ENCODE measurements at regions of chr11 and their contacts with region 1.

Region 1: DNA sequence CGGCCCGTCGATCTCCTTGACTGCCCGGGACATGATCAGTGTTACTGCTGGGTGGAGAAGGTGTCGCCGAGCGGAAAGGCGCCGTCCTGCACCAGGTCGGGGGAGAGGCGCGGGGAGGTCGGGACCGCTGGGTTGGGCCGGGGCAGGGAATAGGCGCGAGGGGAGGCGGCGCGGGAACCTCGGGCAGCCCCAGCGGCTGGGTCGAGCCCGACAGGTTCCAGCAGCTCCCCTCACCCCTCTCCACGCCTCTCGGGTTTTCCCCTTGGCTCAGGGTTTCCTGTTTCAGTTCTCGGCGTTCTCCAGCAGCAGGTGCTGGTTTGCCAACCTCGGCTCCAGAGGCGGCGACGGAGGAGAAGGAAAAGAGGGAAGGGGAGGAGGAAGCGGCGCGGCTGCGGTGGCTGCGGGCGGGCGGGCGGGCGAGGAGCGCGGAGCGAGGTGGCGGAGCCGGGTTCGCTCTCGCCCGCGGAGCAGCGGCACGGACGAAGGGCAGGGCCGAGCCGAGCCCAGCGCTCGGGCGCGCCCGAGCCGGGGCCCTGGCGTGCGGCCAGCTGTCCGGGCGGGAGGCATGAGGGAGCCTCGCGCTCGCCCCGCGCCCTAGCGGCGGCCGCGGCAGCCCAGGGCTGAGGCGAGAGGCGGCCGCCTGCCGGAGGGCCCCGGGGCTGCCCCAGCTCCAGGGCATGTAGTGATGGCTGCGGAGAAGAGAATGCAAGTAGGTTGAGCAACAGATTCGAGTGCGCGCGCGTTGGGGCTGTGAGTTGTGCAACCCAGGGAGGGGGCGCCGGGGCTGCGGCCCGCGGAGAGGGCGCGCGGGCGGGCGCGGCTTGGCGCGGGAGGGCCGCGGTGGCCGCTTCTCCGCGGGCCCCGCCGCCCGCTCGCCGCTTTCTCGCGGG is at the start of gene ZC3H12C:
- DNase-seq: peak; percentile 80 to 89
- H3K4me3 ChIP-seq: peak within 1 kb of the TSS; percentile 71 to 85
- H3K27ac ChIP-seq: peak within 1 kb of the TSS; percentile 94 to 96
- H3K4me1 ChIP-seq: peaks cover 0 to 24% (median 7%) of the 10 kb centered on the region in 4 donors
- H3K27me3 ChIP-seq: no peaks in the 10 kb centered on the region
- CTCF ChIP-seq: peak; percentile 45 to 70

Region 2: GRCh38 chr11:109946322-109946846 is 146.4 kb before region 1 on chr11:
- intact Hi-C with region 1: loop called (anchors 5 kb)
- DNase-seq: peak; percentile 88 to 91
- H3K4me3 ChIP-seq: peak overlapping the region; percentile 30 to 35
- H3K27ac ChIP-seq: peak overlapping the region; percentile 20 to 52
- H3K4me1 ChIP-seq: peaks cover 0 to 4% (median 0%) of the 10 kb centered on the region in 4 donors
- H3K27me3 ChIP-seq: no peaks in the 10 kb centered on the region
- CTCF ChIP-seq: peak; percentile 82 to 89

Region 3: GRCh38 chr11:110000031-110000502 is 92.7 kb before region 1 on chr11:
- intact Hi-C with region 1: loop called (anchors 10 kb)
- DNase-seq: no peak
- H3K4me3 ChIP-seq: no peak overlapping the region
- H3K27ac ChIP-seq: peak overlapping the region in 1 of 2 donors; percentile 42
- H3K4me1 ChIP-seq: peaks cover 0 to 18% (median 7%) of the 10 kb centered on the region in 4 donors
- H3K27me3 ChIP-seq: no peaks in the 10 kb centered on the region
- CTCF ChIP-seq: no peak

Region 4: DNA sequence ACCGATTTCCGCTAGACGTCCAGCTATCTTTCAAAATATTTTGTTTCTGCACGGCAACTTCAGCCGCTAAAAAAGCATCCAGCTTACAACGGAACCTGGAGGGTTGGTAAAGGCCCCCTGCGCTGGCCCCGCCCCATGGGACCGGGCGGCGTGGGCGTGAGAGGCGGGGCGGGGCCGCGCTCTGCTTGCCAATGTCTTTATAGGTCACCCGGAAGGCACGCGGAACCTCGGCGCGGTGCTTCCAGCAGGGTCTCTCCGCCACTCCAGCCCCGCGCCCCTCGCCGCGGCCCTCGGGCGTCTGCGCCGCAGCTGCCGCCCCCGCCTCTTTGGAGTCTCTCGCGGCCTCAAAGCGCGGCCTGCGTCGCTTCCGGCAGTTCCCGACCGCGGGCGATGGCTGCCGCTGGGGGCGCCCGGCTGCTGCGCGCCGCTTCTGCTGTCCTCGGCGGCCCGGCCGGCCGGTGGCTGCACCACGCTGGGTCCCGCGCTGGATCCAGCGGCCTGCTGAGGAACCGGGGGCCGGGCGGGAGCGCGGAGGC is 337.0 kb after region 1 on chr11 and contains the start of gene FDX1:
- intact Hi-C with region 1: loop called (anchors 5 kb)
- DNase-seq: peak; percentile 73 to 85
- H3K4me3 ChIP-seq: peak within 1 kb of the TSS; percentile 84 to 87
- H3K27ac ChIP-seq: peak within 1 kb of the TSS; percentile 92 to 93
- H3K4me1 ChIP-seq: peaks cover 0 to 31% (median 11%) of the 10 kb centered on the region in 4 donors
- H3K27me3 ChIP-seq: no peaks in the 10 kb centered on the region
- CTCF ChIP-seq: peak; percentile 62 to 71